ENCODE measurements at regions of chr11 and their contacts with region 1.

Region 1: GRCh38 chr11:78438298-78438975 is 20.8 kb upstream of the GAB2 start:
- DNase-seq: no peak
- ATAC-seq: peak; percentile 92
- H3K4me3 Mint-ChIP-seq: peak overlapping the region; percentile 24
- H3K27ac Mint-ChIP-seq: peak overlapping the region; percentile 51
- H3K4me1 Mint-ChIP-seq: peaks cover 27% of the 10 kb centered on the region
- H3K27me3 Mint-ChIP-seq: no peaks in the 10 kb centered on the region
- CTCF ChIP-seq: no peak

Region 2: DNA sequence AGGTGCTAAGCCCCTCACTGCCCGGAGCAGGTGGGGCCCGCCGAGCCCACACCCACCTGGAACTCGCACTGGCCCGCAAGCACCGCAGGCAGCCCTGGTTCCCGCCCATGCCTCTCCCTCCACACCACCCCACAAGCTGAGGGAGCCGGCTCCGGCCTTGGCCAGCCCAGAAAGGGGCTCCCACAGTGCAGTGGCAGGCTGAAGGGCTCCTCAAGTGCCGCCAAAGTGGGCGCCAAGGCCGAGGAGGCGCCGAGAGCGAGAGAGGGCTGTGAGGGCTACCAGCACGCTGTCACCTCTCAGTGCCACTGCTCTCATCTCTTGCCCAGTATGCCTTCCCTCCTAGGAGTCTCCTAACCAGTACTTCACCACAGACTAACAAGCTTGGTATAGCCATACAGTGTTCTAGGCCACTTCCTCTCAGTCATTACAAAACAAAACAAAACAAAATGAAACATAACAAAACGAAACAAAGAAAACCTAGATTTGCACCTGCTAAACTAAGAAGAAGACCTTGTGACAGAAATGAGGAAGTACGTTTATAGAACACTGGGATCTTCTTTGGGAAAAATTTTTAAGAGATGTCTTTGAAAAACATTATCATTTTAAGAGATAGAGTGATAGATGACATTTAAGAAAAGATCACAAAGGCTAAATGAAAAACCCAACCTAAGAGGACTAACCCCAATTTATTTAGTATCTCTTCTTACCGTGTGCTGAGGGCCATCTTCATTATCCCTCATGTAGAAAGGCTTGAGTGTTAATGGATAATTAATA is 26.9 kb after region 1 on chr11:
- CTCF ChIA-PET with region 1: no interaction called
- POLR2A ChIA-PET with region 1: interaction called, 5 read pairs
- intact Hi-C with region 1: loop called (anchors 2 kb)
- DNase-seq: peak; percentile 35
- ATAC-seq: peak; percentile 93
- H3K4me3 Mint-ChIP-seq: peak overlapping the region; percentile 64
- H3K27ac Mint-ChIP-seq: peak overlapping the region; percentile 90
- H3K4me1 Mint-ChIP-seq: peaks cover 44% of the 10 kb centered on the region
- H3K27me3 Mint-ChIP-seq: no peaks in the 10 kb centered on the region
- CTCF ChIP-seq: no peak

Measured in activated B cell treated with CpG ODN at 0.5 μM for 24 hours (primary cell).